Activated B cell treated with CpG ODN at 0.5 μM for 24 hours (primary cell): ENCODE measurements at regions of chr7 and their contacts with region 1.

Region 1: GRCh38 chr7:26193432-26194207 is 6.9 kb downstream of the HNRNPA2B1 start:
- DNase-seq: no peak
- ATAC-seq: no peak
- H3K4me3 Mint-ChIP-seq: peak overlapping the region; percentile 68
- H3K27ac Mint-ChIP-seq: peak overlapping the region; percentile 77
- H3K4me1 Mint-ChIP-seq: peaks cover 78% of the 10 kb centered on the region
- H3K27me3 Mint-ChIP-seq: no peaks in the 10 kb centered on the region
- CTCF ChIP-seq: no peak

Region 2: DNA sequence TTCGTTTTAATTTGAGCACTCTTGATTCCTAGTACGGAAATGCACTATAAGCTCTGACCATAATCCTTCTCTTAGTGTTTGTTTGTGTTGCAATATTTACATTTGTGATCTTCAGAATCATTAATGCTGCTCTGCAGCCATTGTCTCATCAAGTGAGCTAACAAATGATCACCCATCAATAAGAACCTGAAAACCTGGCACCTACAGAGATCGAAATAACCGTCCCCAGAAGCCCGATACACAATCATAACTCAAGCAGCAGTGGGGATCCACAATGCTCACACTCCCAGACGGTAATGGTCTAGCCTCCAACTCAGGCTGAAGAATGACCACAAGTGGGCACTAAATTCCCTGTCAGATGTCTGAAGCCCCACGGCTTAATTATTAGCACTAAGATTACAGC is 197.6 kb before region 1 on chr7:
- CTCF ChIA-PET with region 1: no interaction called
- POLR2A ChIA-PET with region 1: no interaction called
- intact Hi-C with region 1: no loop called
- DNase-seq: no peak
- ATAC-seq: no peak
- H3K4me3 Mint-ChIP-seq: no peak overlapping the region
- H3K27ac Mint-ChIP-seq: no peak overlapping the region
- H3K4me1 Mint-ChIP-seq: no peaks in the 10 kb centered on the region
- H3K27me3 Mint-ChIP-seq: peaks cover 22% of the 10 kb centered on the region
- CTCF ChIP-seq: no peak

Region 3: DNA sequence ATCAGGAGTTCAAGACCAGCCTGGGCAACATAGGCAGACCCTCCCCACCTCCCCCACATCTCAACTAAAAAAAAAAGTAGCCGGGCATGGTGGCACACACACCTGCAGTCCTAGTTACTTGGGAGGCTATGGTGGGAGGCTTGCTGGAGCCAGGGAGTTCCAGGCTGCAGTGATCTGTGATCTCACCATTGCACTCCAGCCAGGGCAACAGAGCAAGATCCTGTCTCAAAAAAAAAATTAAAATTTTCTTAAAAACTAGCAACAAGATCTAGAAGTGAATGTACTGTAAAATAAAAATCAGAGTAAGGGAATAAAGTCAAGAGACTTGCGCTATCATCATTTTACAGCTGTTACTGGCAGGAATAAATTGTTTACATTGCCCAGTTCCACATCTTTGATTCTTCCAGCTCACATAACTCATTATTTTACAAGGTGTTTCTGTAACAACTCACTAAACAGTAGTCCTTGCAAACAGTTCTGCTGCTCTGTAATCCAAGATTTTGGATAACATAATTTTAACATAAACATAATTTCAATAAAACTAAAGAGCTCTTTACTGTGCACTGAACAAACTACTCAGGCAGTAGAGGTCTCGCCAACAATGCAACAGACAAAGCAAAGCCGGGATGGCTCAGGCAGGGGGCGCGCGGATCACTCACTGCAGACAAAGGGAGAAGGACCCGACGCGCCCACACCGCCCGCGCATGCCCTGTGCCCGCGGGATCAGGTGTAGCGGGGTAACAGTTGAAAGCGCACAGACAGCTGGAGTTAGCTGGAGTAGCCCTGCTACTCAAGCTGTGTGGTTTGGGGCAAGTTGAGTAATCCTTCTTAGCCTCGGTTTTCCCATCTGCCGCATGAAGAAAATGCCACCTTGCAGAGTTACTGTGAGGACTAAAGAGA is 114.9 kb before region 1 on chr7:
- CTCF ChIA-PET with region 1: interaction called, 29 read pairs
- POLR2A ChIA-PET with region 1: interaction called, 23 read pairs
- intact Hi-C with region 1: loop called (anchors 1 kb)
- DNase-seq: peak; percentile 73
- ATAC-seq: peak; percentile 100
- H3K4me3 Mint-ChIP-seq: no peak overlapping the region
- H3K27ac Mint-ChIP-seq: no peak overlapping the region
- H3K4me1 Mint-ChIP-seq: peaks cover 7% of the 10 kb centered on the region
- H3K27me3 Mint-ChIP-seq: peaks cover 33% of the 10 kb centered on the region
- CTCF ChIP-seq: no peak

Region 4: GRCh38 chr7:26160881-26161280 is 32.7 kb before region 1 on chr7:
- CTCF ChIA-PET with region 1: interaction called, 13 read pairs
- POLR2A ChIA-PET with region 1: interaction called, 22 read pairs
- intact Hi-C with region 1: no loop called
- DNase-seq: no peak
- ATAC-seq: no peak
- H3K4me3 Mint-ChIP-seq: no peak overlapping the region
- H3K27ac Mint-ChIP-seq: no peak overlapping the region
- H3K4me1 Mint-ChIP-seq: peaks cover 30% of the 10 kb centered on the region
- H3K27me3 Mint-ChIP-seq: no peaks in the 10 kb centered on the region
- CTCF ChIP-seq: no peak

Region 5: GRCh38 chr7:26237035-26237807 is 43.6 kb after region 1 on chr7:
- CTCF ChIA-PET with region 1: no interaction called
- POLR2A ChIA-PET with region 1: no interaction called
- intact Hi-C with region 1: no loop called
- DNase-seq: no peak
- ATAC-seq: no peak
- H3K4me3 Mint-ChIP-seq: no peak overlapping the region
- H3K27ac Mint-ChIP-seq: no peak overlapping the region
- H3K4me1 Mint-ChIP-seq: no peaks in the 10 kb centered on the region
- H3K27me3 Mint-ChIP-seq: peaks cover 1% of the 10 kb centered on the region
- CTCF ChIP-seq: no peak